Activated B cell treated with CpG ODN at 0.5 μM for 24 hours (primary cell): ENCODE measurements at regions of chr11 and their contacts with region 1.

Region 1: DNA sequence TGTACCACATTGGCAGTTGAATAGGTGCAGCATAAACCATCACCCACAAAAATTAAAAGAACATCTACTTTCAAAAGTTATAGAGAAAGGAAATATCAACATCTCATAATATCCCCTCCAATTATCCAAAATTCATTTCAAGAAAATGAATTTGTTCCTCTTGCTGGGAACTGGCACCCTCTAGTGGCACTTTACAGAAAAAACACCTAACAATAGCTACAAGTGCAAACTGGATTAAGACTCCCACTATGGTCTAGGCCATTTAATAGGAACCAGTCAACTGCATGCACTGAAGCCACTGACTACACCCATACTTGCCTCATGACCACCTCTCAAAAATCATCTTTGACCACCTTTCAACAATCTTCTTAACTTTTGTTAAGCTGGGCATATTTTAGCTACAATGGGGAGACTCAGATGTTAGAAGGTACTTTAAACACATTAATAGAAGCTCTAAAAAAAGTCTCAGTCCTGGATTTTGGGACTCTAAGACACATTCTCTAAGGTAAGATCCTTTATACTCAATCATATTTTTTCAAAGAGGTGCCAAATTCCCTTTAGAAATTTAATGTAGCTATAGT is 17.3 kb downstream of the TRAF6 start:
- DNase-seq: no peak
- ATAC-seq: peak; percentile 65
- H3K4me3 Mint-ChIP-seq: no peak overlapping the region
- H3K27ac Mint-ChIP-seq: no peak overlapping the region
- H3K4me1 Mint-ChIP-seq: peaks cover 15% of the 10 kb centered on the region
- H3K27me3 Mint-ChIP-seq: no peaks in the 10 kb centered on the region
- CTCF ChIP-seq: no peak

Region 2: GRCh38 chr11:36041988-36042611 is 450.7 kb before region 1 on chr11:
- CTCF ChIA-PET with region 1: interaction called, 3 read pairs
- POLR2A ChIA-PET with region 1: no interaction called
- intact Hi-C with region 1: loop called (anchors 5 kb)
- DNase-seq: no peak
- ATAC-seq: no peak
- H3K4me3 Mint-ChIP-seq: no peak overlapping the region
- H3K27ac Mint-ChIP-seq: no peak overlapping the region
- H3K4me1 Mint-ChIP-seq: no peaks in the 10 kb centered on the region
- H3K27me3 Mint-ChIP-seq: peaks cover 5% of the 10 kb centered on the region
- CTCF ChIP-seq: no peak

Region 3: GRCh38 chr11:36306888-36307287 is 185.9 kb before region 1 on chr11:
- CTCF ChIA-PET with region 1: interaction called, 7 read pairs
- POLR2A ChIA-PET with region 1: no interaction called
- intact Hi-C with region 1: loop called (anchors 1 kb)
- DNase-seq: no peak
- ATAC-seq: no peak
- H3K4me3 Mint-ChIP-seq: no peak overlapping the region
- H3K27ac Mint-ChIP-seq: no peak overlapping the region
- H3K4me1 Mint-ChIP-seq: no peaks in the 10 kb centered on the region
- H3K27me3 Mint-ChIP-seq: peaks cover 2% of the 10 kb centered on the region
- CTCF ChIP-seq: no peak

Region 4: DNA sequence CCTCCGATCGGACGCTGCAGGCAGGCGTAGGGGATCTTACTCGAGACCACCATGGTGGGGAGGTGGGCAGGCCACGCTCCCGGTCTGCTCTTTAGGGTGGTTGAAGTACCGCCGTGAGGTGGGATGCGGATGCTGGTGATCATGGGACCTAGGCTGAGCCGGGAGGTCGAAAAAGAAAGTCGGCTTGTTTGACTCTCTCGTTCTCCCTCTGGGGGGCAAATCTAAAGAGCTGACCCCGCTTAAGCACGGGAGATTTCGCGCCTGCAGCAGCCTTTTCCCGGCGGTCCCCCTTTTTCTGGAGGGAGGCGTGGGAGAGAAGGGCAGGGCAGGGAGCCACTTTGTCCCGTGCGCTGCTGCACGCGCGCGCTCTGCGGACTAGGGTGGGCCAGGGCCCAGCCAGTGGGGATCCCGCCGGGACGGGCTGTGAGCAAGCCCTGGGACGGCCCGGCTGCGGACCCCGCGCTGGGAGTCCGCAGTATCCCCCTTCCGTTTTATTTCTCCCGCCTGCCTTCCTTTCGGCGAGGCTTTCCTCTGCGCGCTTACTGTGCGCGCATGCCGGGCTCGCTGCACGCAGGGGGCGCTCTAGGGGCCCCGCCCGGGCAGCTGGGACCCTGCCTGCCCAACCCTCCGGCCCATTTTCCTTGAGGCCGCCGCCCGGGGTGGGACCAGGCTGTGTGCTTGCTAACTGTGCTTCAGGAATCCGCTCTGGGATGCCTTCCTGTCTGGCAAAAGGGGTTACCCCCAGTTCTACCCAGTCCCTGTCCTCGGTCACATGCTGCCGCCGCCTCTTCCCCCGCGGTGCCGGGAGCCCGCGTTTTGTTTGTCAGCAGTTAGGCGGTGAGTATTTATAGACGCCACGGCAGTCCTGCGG is 115.7 kb before region 1 on chr11:
- CTCF ChIA-PET with region 1: interaction called, 9 read pairs
- POLR2A ChIA-PET with region 1: no interaction called
- intact Hi-C with region 1: loop called (anchors 1 kb)
- DNase-seq: peak; percentile 44
- ATAC-seq: peak; percentile 66
- H3K4me3 Mint-ChIP-seq: peak overlapping the region; percentile 88
- H3K27ac Mint-ChIP-seq: no peak overlapping the region
- H3K4me1 Mint-ChIP-seq: peaks cover 31% of the 10 kb centered on the region
- H3K27me3 Mint-ChIP-seq: peaks cover 34% of the 10 kb centered on the region
- CTCF ChIP-seq: no peak

Region 5: GRCh38 chr11:36478700-36479329 is 14.0 kb before region 1 on chr11:
- CTCF ChIA-PET with region 1: interaction called, 44 read pairs
- POLR2A ChIA-PET with region 1: no interaction called
- intact Hi-C with region 1: no loop called
- DNase-seq: no peak
- ATAC-seq: no peak
- H3K4me3 Mint-ChIP-seq: no peak overlapping the region
- H3K27ac Mint-ChIP-seq: no peak overlapping the region
- H3K4me1 Mint-ChIP-seq: no peaks in the 10 kb centered on the region
- H3K27me3 Mint-ChIP-seq: no peaks in the 10 kb centered on the region
- CTCF ChIP-seq: no peak

Region 6: DNA sequence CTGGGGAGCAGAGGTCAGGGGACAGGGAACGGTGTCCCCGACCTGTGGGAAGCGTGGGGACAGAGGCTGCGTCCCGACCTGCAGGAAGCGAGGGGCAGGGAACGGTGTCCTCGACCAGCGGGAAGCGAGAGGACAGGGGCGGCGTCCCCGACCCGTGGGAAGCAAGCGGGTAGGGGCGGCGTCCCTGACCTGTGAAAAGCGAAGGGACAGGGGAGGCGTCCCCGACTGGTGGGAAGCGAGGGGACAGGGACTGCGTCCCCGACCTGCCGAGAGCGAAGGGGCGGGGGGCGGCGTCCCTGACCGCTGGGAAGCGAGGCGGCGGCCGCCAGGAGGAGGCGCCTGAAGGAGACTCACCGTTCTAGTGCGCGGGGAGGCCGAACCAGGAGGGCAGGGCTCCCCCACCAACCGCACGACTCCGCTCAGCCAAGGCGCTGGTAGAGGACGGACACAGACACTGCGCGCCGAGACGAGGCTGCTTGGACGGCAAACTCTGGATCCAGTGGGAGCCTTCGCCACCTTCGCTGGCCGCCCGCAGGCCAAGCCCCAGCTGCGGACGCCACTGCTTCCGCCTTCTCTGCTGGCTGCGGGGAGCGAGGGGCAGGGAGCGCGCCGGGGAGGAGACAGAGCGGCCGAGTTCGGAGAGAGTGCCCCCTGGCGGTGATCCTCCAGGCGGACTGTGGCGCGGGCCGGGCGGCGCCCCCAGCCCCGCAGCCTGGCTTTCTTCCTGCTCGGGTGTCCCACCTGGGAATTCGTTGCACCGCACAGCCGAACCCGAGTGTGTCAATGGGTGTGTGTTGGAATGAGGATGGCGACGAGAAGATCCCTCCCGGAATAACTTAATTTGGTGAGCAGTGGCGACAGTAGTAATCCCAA is 17.1 kb after region 1 on chr11 and contains the start of gene TRAF6:
- CTCF ChIA-PET with region 1: interaction called, 22 read pairs
- POLR2A ChIA-PET with region 1: interaction called, 7 read pairs
- intact Hi-C with region 1: loop called (anchors 1 kb)
- DNase-seq: peak; percentile 92
- ATAC-seq: peak; percentile 95
- H3K4me3 Mint-ChIP-seq: peak within 1 kb of the TSS; percentile 97
- H3K27ac Mint-ChIP-seq: peak within 1 kb of the TSS; percentile 91
- H3K4me1 Mint-ChIP-seq: peaks cover 19% of the 10 kb centered on the region
- H3K27me3 Mint-ChIP-seq: peaks cover 9% of the 10 kb centered on the region
- CTCF ChIP-seq: peak; percentile 72
- total RNA-seq, gene TRAF6: 16.9 and 19.3 TPM in 2 replicates